Dendritic cell treated with granulocyte-macrophage colony-stimulating factor and Interleukin-4, amounts not matched to agents 40 ng/mL and 50 ng/mL, for 4 days (primary cell): ENCODE measurements at regions of chr6 and their contacts with region 1.

Region 1: DNA sequence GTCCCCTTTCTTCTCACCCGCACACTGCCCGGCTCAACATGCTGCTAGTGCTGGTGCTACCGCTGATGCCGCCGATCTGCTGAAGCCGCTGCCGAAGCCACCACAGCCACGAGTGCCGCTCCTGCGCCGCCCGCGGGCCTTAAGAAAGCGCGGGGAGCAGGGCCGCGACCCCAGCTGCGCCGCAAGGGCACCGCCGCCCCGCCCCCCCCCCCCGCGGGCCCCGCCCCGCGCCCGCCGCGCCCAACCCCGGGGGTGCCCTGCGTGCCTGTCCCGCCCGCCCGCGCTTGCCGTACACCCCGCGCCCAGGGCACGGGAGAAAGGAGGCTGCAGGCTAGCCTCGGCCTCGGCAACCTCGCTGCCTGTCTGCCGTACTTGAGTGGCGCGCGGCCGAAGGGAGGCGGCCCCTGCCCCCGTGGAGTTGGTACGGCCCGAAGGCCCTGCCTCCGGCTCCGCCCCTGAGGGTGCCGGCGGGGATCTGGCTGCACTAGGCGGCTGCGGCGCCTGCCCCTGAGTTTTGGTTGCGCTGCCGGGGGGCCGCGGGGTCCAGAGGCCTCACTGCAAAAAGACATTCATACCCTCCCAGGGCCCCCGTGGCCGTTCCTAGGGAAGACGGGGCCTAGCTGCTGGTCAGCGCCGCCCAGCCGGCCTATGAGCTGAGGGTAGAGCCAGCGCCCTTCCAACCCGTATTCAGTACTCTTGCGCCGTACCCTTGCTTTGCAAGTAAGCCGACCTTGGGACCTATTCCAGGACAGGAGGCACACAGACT is at the start of gene SOD2:
- H3K4me3 Mint-ChIP-seq: peak within 1 kb of the TSS; percentile 87
- H3K27ac Mint-ChIP-seq: peak within 1 kb of the TSS; percentile 93
- H3K4me1 Mint-ChIP-seq: peaks cover 36% of the 10 kb centered on the region
- H3K27me3 Mint-ChIP-seq: no peaks in the 10 kb centered on the region

Region 2: DNA sequence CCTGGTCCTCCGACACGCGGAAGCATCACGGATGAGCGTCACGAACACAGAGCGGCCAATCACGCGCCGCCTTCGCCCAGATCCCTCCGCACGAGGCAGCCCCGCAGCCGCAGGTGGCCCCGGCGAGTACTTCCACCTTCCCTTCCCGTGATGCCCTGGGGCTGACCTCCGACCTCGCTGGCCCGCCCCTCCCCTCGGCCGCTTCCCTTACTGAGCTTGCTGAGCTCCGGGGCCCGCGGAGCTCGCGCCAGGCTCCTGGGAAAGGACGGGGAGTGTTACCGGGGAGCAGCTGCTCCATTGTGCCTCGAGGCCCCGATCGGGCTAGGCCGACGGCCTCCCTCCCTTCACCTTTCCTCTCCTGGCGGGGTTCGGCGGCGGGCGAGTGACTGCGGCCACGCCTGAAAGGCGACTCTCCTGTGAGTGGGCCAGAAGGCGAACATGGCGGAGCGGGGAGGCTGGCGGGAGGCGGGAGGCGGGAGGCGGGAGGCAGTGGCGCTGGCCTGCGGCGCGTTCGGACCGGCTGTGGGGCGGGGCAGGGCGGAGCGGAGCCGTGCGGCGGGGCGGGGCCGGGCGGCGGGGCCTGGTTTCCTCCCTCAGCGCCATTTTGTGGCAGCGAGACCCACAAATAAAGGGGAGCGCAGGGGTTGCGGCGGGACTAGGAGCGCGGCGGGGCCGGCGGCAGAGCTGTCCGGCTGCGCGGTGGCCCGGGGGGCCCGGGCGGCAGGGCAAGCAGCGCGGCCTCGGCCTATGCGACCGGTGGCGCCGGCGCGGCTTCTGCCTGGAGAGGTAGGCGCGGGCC is 33.8 kb after region 1 on chr6 and contains the start of gene WTAP:
- intact Hi-C with region 1: loop called (anchors 1 kb)
- H3K4me3 Mint-ChIP-seq: peak within 1 kb of the TSS; percentile 90
- H3K27ac Mint-ChIP-seq: peak within 1 kb of the TSS; percentile 97
- H3K4me1 Mint-ChIP-seq: peaks cover 35% of the 10 kb centered on the region
- H3K27me3 Mint-ChIP-seq: no peaks in the 10 kb centered on the region

Region 3: GRCh38 chr6:159761873-159762680 is 68.8 kb after region 1 on chr6 and contains the start of gene ACAT2:
- intact Hi-C with region 1: loop called (anchors 1 kb)
- H3K4me3 Mint-ChIP-seq: peak within 1 kb of the TSS; percentile 95
- H3K27ac Mint-ChIP-seq: peak within 1 kb of the TSS; percentile 95
- H3K4me1 Mint-ChIP-seq: peaks cover 39% of the 10 kb centered on the region
- H3K27me3 Mint-ChIP-seq: no peaks in the 10 kb centered on the region

Region 4: DNA sequence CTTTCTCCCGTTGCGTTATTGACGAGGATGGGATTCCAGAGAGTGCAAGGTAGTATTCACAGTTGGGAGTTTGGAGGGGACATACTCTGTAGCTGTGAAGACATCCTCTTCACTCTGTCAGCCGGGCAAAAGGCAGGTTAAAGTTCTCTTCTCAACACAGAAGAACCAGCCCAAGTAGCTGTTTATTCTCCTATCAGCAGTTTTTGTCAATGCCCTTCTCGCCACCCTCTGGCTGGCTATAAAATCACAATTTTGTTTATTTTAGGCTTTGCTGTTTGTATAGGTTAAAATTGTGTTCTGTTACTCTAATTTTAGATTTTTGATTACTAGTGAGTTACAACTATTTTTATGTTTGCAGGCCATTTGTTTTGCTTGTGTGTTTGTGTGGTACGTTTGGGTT is 159.6 kb after region 1 on chr6:
- intact Hi-C with region 1: loop called (anchors 2 kb)
- H3K4me3 Mint-ChIP-seq: no peak overlapping the region
- H3K27ac Mint-ChIP-seq: no peak overlapping the region
- H3K4me1 Mint-ChIP-seq: peaks cover 24% of the 10 kb centered on the region
- H3K27me3 Mint-ChIP-seq: no peaks in the 10 kb centered on the region

Region 5: GRCh38 chr6:159968440-159969203 is 275.3 kb after region 1 on chr6 and contains the start of gene IGF2R:
- intact Hi-C with region 1: loop called (anchors 5 kb)
- H3K4me3 Mint-ChIP-seq: peak within 1 kb of the TSS; percentile 83
- H3K27ac Mint-ChIP-seq: peak within 1 kb of the TSS; percentile 83
- H3K4me1 Mint-ChIP-seq: peaks cover 51% of the 10 kb centered on the region
- H3K27me3 Mint-ChIP-seq: no peaks in the 10 kb centered on the region